GM12878 (cell line): ENCODE measurements at regions of chr5 and their contacts with region 1.

Region 1: DNA sequence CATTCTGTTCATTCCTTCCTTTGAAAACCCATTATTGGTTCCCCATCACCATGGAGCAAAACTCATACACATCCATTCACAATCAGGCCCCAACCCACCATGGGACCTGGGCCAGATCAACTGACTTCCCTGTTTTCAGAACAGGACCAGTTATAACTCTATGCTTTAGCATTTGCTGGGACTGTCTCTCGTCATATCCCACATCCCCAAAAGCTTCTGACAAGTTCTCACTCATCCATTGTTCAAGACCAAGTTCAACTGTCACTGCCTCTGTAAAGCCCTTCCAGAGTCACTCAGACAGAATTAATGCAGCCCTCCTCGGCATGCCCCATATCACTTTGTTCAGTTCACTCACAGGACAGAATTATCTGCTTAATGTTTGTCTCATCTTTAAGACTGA is 4.0 kb downstream of the FAM169A start:
- DNase-seq: no peak
- ATAC-seq: peak; percentile 4
- H3K4me3 ChIP-seq: no peak overlapping the region
- H3K27ac ChIP-seq: no peak overlapping the region
- H3K4me1 ChIP-seq: no peaks in the 10 kb centered on the region
- H3K27me3 ChIP-seq: peaks cover 0 to 5% of the 10 kb centered on the region in 2 experiments; a peak in 3 of 4 replicates
- CTCF ChIP-seq: no peak
- EP300 ChIP-seq: no peak
- POLR2A ChIP-seq: no peak
- RAD21 ChIP-seq: no peak

Region 2: DNA sequence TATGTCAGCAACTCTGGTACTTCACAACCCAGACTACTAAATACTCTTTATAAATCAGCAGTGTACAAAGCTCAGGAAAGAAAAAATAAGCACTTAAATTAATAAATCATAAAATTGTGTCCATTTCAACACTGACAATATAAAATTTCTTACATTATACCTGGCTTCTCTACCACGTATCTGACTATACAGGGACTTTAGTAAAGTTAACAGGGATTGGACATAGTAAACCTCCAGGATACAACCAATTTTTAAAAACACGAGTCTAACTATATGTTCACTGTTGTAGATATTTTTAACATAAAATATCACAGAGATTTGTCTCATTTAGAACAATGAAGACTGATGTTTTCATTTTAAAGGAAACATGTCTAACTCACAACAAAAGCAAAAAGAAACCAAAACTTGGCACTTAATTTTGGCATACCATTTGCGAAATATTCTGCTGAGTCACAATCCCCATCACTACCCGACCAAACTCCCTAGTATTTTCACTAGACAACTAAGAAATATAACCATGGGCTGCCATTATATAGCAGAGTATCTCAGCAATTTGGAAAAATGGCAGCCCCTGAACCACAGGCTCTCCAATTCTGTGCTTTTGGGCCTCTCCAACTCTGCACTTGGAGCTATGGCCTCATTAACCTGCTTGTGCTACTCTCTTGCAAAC is 10.4 kb before region 1 on chr5:
- CTCF ChIA-PET with region 1: interaction called, 3 read pairs
- POLR2A ChIA-PET with region 1: interaction called, 3 read pairs
- RAD21 ChIA-PET with region 1: no interaction called
- SMC1A ChIA-PET with region 1: interaction called, 13 read pairs
- in situ Hi-C with region 1: no loop called
- intact Hi-C with region 1: no loop called
- DNase-seq: peak; percentile 16
- ATAC-seq: peak; percentile 67
- H3K4me3 ChIP-seq: peak overlapping the region; percentile 28
- H3K27ac ChIP-seq: peak overlapping the region; percentile 59
- H3K4me1 ChIP-seq: 0 out of 2 replicates have a peak, but pooled peaks cover 5% of the 10 kb centered on the region
- H3K27me3 ChIP-seq: no peaks in the 10 kb centered on the region
- CTCF ChIP-seq: no peak
- EP300 ChIP-seq: no peak
- POLR2A ChIP-seq: no peak
- RAD21 ChIP-seq: no peak